ENCODE measurements at regions of chr5 and their contacts with region 1.

Region 1: DNA sequence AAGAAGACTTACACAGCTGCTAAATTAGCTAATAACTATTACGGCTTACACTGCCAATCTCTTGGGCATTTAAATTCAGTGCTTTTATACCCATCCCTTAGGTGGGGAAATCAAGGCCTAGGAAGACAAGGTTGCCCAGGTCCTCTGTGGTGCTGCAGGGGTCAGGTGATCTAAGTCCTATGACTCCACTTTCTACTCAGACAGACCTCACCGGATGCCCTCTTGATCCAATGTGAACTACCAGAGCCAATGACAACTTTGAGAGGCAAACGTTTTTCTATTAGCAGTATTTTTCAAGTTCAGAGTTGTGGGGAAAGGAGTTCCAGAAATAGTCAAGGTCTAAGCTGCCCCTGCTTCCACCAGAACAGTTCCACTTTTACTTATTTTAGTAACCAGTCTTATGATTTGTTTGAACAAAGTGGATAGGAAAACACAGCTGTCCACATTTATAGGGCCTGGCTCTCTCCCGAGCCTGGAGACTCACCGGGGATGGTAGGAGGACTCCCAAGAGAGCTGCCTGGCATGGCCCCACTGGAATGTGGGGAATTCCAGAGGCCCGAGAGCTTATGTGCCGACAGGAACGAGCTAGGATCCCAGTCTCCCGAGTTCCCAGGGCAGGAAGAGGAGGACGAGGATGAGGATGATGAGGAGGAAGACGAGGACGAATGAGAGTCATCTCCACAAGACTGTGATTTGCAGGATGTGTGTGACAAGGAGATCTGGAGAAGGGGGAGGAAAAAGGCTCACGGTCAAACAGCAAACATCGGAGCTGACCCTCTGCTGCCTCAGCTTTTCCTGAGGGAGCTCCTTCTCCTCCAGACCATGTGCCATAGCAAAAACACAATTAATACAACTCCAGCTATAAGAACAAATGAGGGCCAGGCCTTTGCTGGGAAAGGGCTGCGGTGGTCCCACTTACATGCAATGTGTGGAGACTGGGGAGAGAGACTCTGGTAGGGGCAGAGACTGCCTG is 16.7 kb downstream of the FAM193B start:
- DNase-seq: peak; percentile 89
- H3K4me3 ChIP-seq: no peak overlapping the region
- CTCF ChIP-seq: no peak

Region 2: GRCh38 chr5:177256296-177256695 is 281.4 kb before region 1 on chr5:
- CTCF ChIA-PET with region 1: no interaction called
- POLR2A ChIA-PET with region 1: no interaction called
- DNase-seq: no peak
- H3K4me3 ChIP-seq: no peak overlapping the region
- CTCF ChIP-seq: no peak

Region 3: DNA sequence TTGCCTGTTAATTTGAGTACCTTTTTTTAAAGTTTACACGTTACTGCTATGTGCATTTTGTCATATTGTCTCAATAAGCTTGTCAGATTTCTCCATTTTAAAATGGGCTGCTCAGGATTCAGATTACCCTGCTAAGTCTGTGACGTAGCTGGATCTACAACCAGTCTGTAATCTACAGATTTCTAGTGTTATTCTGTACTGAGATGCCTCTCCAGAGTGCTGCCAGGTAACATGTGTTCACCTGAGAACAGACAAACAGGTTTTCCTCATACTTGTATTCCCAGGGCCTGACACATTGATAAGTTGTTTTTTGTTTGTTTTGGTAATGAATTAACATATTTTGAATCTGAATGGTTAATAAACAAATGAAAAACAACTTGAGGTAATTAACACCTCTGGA is 249.5 kb before region 1 on chr5:
- CTCF ChIA-PET with region 1: no interaction called
- POLR2A ChIA-PET with region 1: no interaction called
- DNase-seq: no peak
- H3K4me3 ChIP-seq: no peak overlapping the region
- CTCF ChIP-seq: no peak

Region 4: DNA sequence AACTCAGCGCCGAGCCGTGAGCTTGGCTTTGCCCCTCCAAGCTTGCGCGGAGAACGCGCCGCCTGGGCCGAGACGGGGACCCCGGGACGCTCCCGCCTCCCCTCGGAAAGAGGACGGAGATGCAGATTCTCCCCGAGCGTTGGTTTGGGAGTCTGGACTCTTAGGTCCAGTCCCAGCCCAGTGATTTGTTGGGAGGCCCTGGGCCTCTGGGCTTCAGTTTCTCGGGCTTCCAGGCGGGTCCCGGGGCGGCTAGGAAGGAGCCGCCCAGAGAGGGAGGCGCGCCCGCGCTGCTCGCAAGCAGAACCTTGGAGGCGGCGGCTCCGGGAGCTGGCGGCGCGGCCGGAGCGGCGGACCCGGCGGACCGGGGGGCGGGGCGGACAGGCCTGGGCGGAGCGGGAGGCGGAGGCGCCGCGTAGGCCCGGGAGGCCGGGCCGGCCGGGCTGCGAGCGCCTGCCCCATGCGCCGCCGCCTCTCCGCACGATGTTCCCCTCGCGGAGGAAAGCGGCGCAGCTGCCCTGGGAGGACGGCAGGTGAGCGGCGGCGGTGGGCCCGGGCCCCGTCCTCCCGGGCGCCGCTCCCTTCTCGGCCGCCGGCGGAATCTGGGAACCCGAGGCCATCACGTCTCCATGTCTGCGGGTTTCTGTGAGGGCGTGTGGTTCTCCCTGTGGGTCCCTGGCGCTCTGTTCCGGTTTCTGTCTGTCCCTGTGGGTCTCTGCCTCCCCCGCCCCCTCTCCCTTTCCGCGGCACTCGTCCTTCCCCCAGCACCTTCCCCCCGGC is 62.2 kb after region 1 on chr5 and contains the start of gene B4GALT7:
- CTCF ChIA-PET with region 1: no interaction called
- POLR2A ChIA-PET with region 1: interaction called, 10 read pairs
- DNase-seq: no peak
- H3K4me3 ChIP-seq: peak within 1 kb of the TSS; percentile 80
- CTCF ChIP-seq: no peak